ENCODE measurements at regions of chr6 and their contacts with region 1.

Region 1: DNA sequence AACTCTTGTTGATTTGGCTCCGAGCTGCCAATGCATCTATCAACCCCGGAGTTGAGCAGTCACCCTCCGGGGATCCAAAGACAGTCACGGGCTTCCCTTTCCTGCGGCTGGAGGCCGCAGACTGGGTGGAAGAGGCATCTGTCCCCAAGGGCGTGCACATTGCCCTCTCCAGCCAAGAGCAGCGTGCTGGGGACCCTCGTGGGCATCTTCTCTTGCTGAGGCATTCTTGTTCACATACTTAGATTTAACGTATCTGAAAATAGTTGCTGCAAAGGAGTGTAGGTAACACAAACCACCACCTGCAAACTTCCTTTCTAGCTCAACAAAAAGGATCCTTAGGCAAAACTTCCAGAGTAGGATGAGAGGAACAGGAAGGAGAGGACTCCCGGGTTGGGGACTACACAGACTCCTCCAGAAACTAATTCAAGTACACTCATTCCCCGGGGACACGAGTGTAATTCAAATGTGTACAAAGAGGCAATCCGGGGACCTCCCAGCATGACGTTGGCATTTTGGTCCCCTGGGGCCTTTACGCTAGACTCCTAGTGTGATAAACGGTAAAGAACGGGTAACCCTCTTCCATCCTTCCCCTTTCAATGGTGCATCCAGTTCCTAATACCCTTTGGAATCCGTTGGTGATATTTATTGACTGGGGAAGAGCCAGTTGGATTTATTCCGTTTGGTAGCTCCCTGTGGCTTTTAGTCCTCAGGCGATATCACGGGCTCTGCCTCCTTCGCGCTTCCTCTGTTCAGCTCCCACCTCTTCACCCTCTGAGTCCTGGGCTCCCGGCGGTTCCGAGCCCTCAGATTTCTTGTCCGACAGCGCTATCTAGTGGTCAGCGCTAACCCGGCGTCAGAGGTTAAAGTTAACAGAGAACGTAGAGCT is 2.7 kb upstream of the COL12A1 start:
- DNase-seq: peak; percentile 63
- ATAC-seq: peak; percentile 76
- H3K4me3 Mint-ChIP-seq: peak overlapping the region; percentile 78
- H3K27ac Mint-ChIP-seq: peak overlapping the region; percentile 30
- H3K4me1 Mint-ChIP-seq: peaks cover 52% of the 10 kb centered on the region
- H3K27me3 Mint-ChIP-seq: peaks cover 71% of the 10 kb centered on the region
- CTCF ChIP-seq: peak; percentile 56

Region 2: GRCh38 chr6:73675466-73676098 is 1533.0 kb before region 1 on chr6:
- CTCF ChIA-PET with region 1: interaction called, 13 read pairs
- POLR2A ChIA-PET with region 1: no interaction called
- intact Hi-C with region 1: loop called (anchors 1 kb)
- DNase-seq: peak; percentile 20
- ATAC-seq: peak; percentile 83
- H3K4me3 Mint-ChIP-seq: no peak overlapping the region
- H3K27ac Mint-ChIP-seq: no peak overlapping the region
- H3K4me1 Mint-ChIP-seq: no peaks in the 10 kb centered on the region
- H3K27me3 Mint-ChIP-seq: peaks cover 11% of the 10 kb centered on the region
- CTCF ChIP-seq: peak; percentile 83

Region 3: DNA sequence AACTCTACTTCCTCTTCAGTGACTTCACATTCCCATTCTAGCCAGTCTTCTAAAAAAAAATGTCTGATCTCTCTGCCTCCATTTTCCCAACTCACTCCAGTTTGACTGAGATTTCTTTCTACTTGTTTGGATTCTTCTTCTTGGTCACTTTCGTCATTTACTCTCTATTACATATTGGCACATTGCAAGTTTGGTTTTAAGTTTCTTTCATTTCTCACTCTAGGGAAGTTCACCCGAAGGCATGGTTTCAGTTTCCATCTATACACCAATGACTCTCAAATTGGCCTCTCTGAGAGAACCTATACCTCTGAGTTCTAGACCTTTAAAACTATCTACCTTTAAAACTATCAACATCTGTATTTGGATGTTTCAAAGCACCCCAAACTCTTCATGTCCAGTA is 1461.3 kb before region 1 on chr6:
- CTCF ChIA-PET with region 1: interaction called, 272 read pairs
- POLR2A ChIA-PET with region 1: no interaction called
- intact Hi-C with region 1: no loop called
- DNase-seq: no peak
- ATAC-seq: peak; percentile 80
- H3K4me3 Mint-ChIP-seq: no peak overlapping the region
- H3K27ac Mint-ChIP-seq: no peak overlapping the region
- H3K4me1 Mint-ChIP-seq: no peaks in the 10 kb centered on the region
- H3K27me3 Mint-ChIP-seq: no peaks in the 10 kb centered on the region
- CTCF ChIP-seq: no peak

Region 4: GRCh38 chr6:74409447-74409846 is 799.1 kb before region 1 on chr6:
- CTCF ChIA-PET with region 1: no interaction called
- POLR2A ChIA-PET with region 1: no interaction called
- intact Hi-C with region 1: loop called (anchors 2 kb)
- DNase-seq: no peak
- ATAC-seq: no peak
- H3K4me3 Mint-ChIP-seq: no peak overlapping the region
- H3K27ac Mint-ChIP-seq: no peak overlapping the region
- H3K4me1 Mint-ChIP-seq: no peaks in the 10 kb centered on the region
- H3K27me3 Mint-ChIP-seq: no peaks in the 10 kb centered on the region
- CTCF ChIP-seq: no peak

Region 5: GRCh38 chr6:75243333-75244062 is 35.0 kb after region 1 on chr6 and contains the start of gene COX7A2:
- CTCF ChIA-PET with region 1: interaction called, 7 read pairs
- POLR2A ChIA-PET with region 1: interaction called, 8 read pairs
- intact Hi-C with region 1: loop called (anchors 2 kb)
- DNase-seq: peak; percentile 77
- ATAC-seq: peak; percentile 97
- H3K4me3 Mint-ChIP-seq: peak within 1 kb of the TSS; percentile 94
- H3K27ac Mint-ChIP-seq: peak within 1 kb of the TSS; percentile 95
- H3K4me1 Mint-ChIP-seq: peaks cover 21% of the 10 kb centered on the region
- H3K27me3 Mint-ChIP-seq: peaks cover 13% of the 10 kb centered on the region
- CTCF ChIP-seq: no peak
- total RNA-seq, gene COX7A2: 259 and 301 TPM in 2 replicates

Region 6: DNA sequence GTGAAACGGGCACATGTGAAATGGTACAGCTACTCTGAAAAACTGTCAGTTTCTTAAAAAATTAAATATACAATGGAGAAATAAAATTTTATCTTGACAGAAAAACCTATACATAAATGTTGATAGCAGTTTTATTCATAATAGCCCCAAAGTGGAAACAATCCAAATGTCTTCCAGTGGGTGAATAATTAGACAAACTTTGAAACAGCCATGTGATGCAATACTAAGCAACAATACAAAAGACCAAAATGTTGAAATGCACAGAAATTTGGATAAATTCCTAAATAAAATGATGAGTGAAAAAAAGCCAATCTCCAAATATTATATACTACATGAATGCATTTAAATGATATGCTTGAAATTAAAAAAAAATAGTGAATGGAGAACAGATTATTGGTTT is 1731.6 kb after region 1 on chr6:
- CTCF ChIA-PET with region 1: no interaction called
- POLR2A ChIA-PET with region 1: no interaction called
- intact Hi-C with region 1: no loop called
- DNase-seq: no peak
- ATAC-seq: no peak
- H3K4me3 Mint-ChIP-seq: no peak overlapping the region
- H3K27ac Mint-ChIP-seq: no peak overlapping the region
- H3K4me1 Mint-ChIP-seq: no peaks in the 10 kb centered on the region
- H3K27me3 Mint-ChIP-seq: no peaks in the 10 kb centered on the region
- CTCF ChIP-seq: no peak